ENCODE measurements at regions of chr15 and their contacts with region 1.

Region 1: GRCh38 chr15:23857028-23857641 is 170.0 kb upstream of the NDN start:
- DNase-seq: no peak
- ATAC-seq: no peak

Region 2: GRCh38 chr15:23642413-23643044 is 214.6 kb before region 1 on chr15:
- intact Hi-C with region 1: loop called (anchors 10 kb)
- DNase-seq: peak; percentile 45
- ATAC-seq: peak; percentile 77

Region 3: GRCh38 chr15:23760024-23760423 is 97.1 kb before region 1 on chr15:
- intact Hi-C with region 1: no loop called
- DNase-seq: no peak
- ATAC-seq: no peak